IMR-90 (cell line): ENCODE measurements at regions of chr22 and their contacts with region 1.

Region 1: DNA sequence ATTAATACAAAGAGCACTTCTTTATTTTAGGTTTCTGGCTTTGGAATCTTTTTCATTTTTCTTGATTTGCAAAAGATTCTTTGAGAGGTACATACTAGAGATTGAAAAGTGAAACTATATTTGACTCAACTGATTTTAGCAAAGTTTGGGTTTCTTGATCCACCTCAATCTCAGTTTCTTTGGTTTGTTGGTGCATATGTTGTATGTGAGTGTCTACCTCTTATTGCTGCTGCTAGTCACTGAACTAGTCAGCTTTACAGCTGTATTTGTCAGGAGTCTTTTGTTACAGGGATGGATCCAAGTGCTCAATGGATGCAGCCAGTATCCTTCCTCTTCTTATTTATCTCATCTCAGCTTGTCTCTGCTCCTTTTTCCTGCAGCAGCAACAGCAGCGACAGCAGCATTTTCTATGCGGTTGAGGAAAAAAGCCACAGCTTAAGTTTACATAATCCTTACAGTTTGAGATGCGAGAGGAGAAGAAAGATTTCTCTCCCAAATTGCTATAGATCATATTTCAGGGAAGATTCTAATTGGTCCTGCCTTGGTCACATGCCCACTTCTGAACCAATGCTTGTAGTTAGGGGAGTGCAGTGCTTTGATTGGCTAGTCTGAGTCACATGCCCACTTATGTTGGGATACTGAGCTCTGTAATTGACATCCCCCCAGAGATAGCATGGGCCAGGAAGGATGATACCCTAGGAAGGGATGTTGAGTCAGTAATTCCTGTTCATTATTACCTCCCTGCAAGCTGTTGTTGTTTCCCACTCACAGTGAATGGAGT is 10.0 kb upstream of the ZNRF3 start:
- DNase-seq: peak; percentile 22
- ATAC-seq: peak; percentile 21; the same call in 1 of the 2 replicates
- H3K4me3 ChIP-seq: no peak overlapping the region
- H3K27ac ChIP-seq: no peak overlapping the region
- H3K4me1 ChIP-seq: no peaks in the 10 kb centered on the region
- H3K27me3 ChIP-seq: no peaks in the 10 kb centered on the region
- CTCF ChIP-seq: no peak
- POLR2A ChIP-seq: no peak
- RAD21 ChIP-seq: no peak

Region 2: DNA sequence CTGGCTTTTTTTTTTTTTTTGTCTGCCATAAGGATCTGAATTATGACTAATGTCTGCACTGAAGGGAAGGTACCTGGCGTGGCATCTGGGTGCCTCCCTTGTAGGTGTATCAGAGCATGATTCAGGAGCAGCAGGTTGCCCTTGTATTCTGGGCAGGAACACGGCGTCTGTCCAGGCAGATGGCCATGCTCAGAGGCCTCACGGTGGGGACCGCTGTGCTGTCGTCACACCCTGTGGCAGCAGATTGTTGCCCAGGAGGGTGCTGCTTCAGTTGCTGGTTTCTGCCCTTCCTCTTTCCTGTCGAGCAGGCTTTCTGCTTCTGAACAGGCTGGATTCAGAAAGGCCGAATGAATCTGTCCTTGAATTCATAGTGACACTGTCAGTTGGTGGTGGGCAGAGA is 21.0 kb after region 1 on chr22:
- CTCF ChIA-PET with region 1: no interaction called
- POLR2A ChIA-PET with region 1: no interaction called
- dilution Hi-C with region 1: no loop called
- in situ Hi-C with region 1: no loop called
- intact Hi-C with region 1: no loop called
- DNase-seq: no peak
- ATAC-seq: no peak
- H3K4me3 ChIP-seq: no peak overlapping the region
- H3K27ac ChIP-seq: no peak overlapping the region
- H3K4me1 ChIP-seq: peaks cover 4% of the 10 kb centered on the region
- H3K27me3 ChIP-seq: no peaks in the 10 kb centered on the region
- CTCF ChIP-seq: no peak
- POLR2A ChIP-seq: no peak
- RAD21 ChIP-seq: no peak

Region 3: GRCh38 chr22:30356449-30357235 is 1483.3 kb after region 1 on chr22 and contains the starts of genes CCDC157 and SF3A1:
- CTCF ChIA-PET with region 1: no interaction called
- POLR2A ChIA-PET with region 1: interaction called, 11 read pairs
- dilution Hi-C with region 1: no loop called
- in situ Hi-C with region 1: no loop called
- intact Hi-C with region 1: no loop called
- DNase-seq: peak; percentile 91
- ATAC-seq: peak; percentile 97
- H3K4me3 ChIP-seq: peak within 1 kb of the TSS; percentile 98
- H3K27ac ChIP-seq: peak within 1 kb of the TSS; percentile 98
- H3K4me1 ChIP-seq: peaks cover 12% of the 10 kb centered on the region
- H3K27me3 ChIP-seq: no peaks in the 10 kb centered on the region
- CTCF ChIP-seq: no peak
- POLR2A ChIP-seq: peak; percentile 92
- RAD21 ChIP-seq: no peak
- total RNA-seq, gene CCDC157: 0.83 and 0.90 TPM in 2 replicates
- total RNA-seq, gene SF3A1: 36.9 and 49.7 TPM in 2 replicates